ENCODE measurements at regions of chr6 and their contacts with region 1.

Region 1: GRCh38 chr6:144232176-144232831 is 52.8 kb upstream of the UTRN start:
- DNase-seq: no peak
- H3K4me3 ChIP-seq: no peak overlapping the region
- H3K27ac ChIP-seq: no peak overlapping the region
- H3K4me1 ChIP-seq: peaks cover 0 to 9% (median 4%) of the 10 kb centered on the region in 4 experiments; a peak in 3 of 7 replicates
- H3K27me3 ChIP-seq: no peaks in the 10 kb centered on the region
- CTCF ChIP-seq: no peak
- EP300 ChIP-seq: no peak
- POLR2A ChIP-seq: no peak
- RAD21 ChIP-seq: no peak

Region 2: DNA sequence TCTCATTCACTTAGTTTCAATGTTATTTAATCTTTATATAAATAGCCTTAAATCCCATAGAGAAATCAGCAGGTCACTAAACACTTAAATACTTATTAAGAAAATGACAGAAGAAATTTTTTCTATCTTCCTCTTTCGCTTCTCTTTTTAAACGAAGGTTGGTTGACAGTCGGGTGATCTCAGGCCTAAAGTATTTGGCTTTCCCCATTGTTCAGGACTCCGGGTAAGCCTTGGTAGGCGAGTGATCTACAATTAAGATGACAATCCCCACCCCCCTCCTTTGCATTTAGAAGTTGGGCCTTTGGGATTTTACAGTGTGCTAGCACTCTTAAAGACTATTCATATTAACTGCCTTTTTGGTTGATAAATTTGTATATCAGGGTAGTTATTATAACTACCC is 33.1 kb after region 1 on chr6:
- CTCF ChIA-PET with region 1: interaction called, 4 read pairs
- POLR2A ChIA-PET with region 1: interaction called, 10 read pairs
- DNase-seq: no peak
- H3K4me3 ChIP-seq: peak overlapping the region in 1 of 4 experiments; percentile 49; a peak in 3 of 8 replicates
- H3K27ac ChIP-seq: no peak overlapping the region
- H3K4me1 ChIP-seq: peaks cover 0 to 14% (median 10%) of the 10 kb centered on the region in 4 experiments; a peak in 4 of 7 replicates
- H3K27me3 ChIP-seq: no peaks in the 10 kb centered on the region
- CTCF ChIP-seq: no peak
- EP300 ChIP-seq: no peak
- POLR2A ChIP-seq: no peak
- RAD21 ChIP-seq: 0 out of 4 replicates have a peak, but pooled peaks of 1 of the 2 experiments have one; percentile 0

Region 3: GRCh38 chr6:144285798-144286502 is 53.6 kb after region 1 on chr6:
- CTCF ChIA-PET with region 1: interaction called, 3 read pairs
- POLR2A ChIA-PET with region 1: interaction called, 11 read pairs
- DNase-seq: peak in 1 of 2 experiments; percentile 69
- H3K4me3 ChIP-seq: peak overlapping the region; percentile 83 to 87 (median 85)
- H3K27ac ChIP-seq: no peak overlapping the region
- H3K4me1 ChIP-seq: peaks cover 0 to 5% (median 2%) of the 10 kb centered on the region in 4 experiments; a peak in 2 of 7 replicates
- H3K27me3 ChIP-seq: no peaks in the 10 kb centered on the region; a peak in 1 of 7 replicates
- CTCF ChIP-seq: no peak
- EP300 ChIP-seq: no peak
- POLR2A ChIP-seq: no peak
- RAD21 ChIP-seq: no peak